Activated T-helper 1 cell treated with anti-CD3 and anti-CD28 coated beads, Interleukin-12 subunit alpha, Interleukin-12 subunit beta, Interleukin-2, Interleukin-4 antibody, amounts not matched to agents 30 ng/mL and 10 ng/mL and 1 ng/mL, durations not matched to agents 14 hours and 24 hours and 36 hours (primary cell): ENCODE measurements at regions of chr4 and their contacts with region 1.

Region 1: GRCh38 chr4:122151982-122152710 is at the start of gene BLTP1:
- DNase-seq: peak; percentile 89
- H3K4me3 Mint-ChIP-seq: peak within 1 kb of the TSS; percentile 97
- H3K27ac Mint-ChIP-seq: peak within 1 kb of the TSS; percentile 98
- H3K4me1 Mint-ChIP-seq: peaks cover 61% of the 10 kb centered on the region
- H3K27me3 Mint-ChIP-seq: no peaks in the 10 kb centered on the region
- total RNA-seq, gene BLTP1: 25.4 and 30.8 TPM in 2 replicates

Region 2: GRCh38 chr4:121800961-121801714 is 351.0 kb before region 1 on chr4 and contains the start of gene EXOSC9:
- intact Hi-C with region 1: loop called (anchors 2 kb)
- DNase-seq: peak; percentile 92
- H3K4me3 Mint-ChIP-seq: peak within 1 kb of the TSS; percentile 90
- H3K27ac Mint-ChIP-seq: peak within 1 kb of the TSS; percentile 97
- H3K4me1 Mint-ChIP-seq: peaks cover 51% of the 10 kb centered on the region
- H3K27me3 Mint-ChIP-seq: no peaks in the 10 kb centered on the region
- total RNA-seq, gene EXOSC9: 71.9 and 74.0 TPM in 2 replicates

Region 3: DNA sequence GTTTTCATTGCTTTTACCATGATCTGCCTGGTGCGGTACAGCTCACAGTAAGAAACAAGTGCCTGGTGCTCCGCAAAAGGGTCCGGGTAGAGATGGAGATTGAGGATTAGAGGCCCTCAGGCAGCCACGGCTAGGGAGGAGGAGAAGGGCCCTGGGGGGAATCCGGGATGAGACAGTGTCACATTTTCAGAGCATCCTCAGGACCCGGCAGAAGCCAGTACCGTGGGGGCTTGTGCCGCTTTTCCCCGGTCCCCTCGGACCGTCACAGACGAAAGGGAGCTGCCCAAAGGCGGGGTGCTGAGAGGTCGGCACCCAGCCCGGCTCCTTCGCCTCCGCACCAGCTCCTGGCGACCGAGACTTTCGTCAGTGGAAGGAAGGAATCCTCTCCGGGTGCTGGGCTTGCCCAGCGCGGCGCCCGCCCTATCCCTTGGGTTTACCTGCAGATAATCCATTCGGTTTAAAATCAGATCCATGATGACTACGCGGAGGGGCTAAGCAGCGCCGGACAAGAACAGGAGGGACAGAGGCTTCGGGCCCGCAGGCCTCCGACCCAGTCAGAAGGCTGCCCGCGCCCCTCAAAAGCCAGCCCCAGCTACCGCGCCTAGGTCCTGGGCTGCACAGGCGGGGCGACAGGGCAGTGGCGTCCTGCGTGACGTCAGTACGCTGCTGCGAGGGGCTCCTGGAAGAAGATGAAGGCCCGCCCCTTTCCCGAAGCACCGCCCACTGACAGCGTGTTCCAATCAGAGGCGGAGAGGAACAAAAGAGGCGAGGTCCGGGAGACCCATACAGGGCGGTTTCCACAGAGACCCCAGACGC is 282.1 kb before region 1 on chr4 and contains the start of gene BBS7:
- intact Hi-C with region 1: loop called (anchors 1 kb)
- DNase-seq: peak; percentile 94
- H3K4me3 Mint-ChIP-seq: peak within 1 kb of the TSS; percentile 99
- H3K27ac Mint-ChIP-seq: peak within 1 kb of the TSS; percentile 91
- H3K4me1 Mint-ChIP-seq: peaks cover 23% of the 10 kb centered on the region
- H3K27me3 Mint-ChIP-seq: peaks cover 22% of the 10 kb centered on the region
- total RNA-seq, gene BBS7: 16.9 and 20.2 TPM in 2 replicates

Region 4: DNA sequence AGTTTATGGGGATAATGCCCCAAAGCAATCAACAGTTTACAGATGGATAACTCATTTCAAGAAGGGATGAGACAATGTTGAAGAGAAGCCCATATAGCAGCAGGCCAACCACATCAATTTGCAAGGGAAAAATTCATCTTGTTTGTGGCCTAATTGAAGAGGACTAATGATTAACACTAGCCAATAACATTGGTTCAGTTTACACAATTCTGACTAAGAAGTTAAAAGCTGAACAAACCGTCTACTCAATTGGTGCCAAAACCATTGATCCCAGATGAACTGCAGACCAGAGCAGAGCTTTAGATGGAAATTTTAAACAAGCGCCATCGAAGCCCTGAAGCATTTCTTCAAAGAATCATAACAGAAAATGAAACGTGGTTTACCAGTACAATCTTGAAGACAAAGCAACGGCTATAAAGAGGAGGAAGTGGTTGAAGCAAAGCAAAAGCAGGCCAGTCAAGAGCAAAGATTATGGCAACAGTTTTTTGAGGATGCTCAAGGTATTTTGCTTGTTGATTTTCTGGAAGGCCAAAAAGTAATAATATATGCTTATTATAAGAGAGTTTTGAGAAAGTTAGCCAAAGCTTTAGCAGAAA is 20.5 kb before region 1 on chr4:
- intact Hi-C with region 1: loop called (anchors 2 kb)
- DNase-seq: peak; percentile 11
- H3K4me3 Mint-ChIP-seq: no peak overlapping the region
- H3K27ac Mint-ChIP-seq: peak overlapping the region; percentile 71
- H3K4me1 Mint-ChIP-seq: peaks cover 32% of the 10 kb centered on the region
- H3K27me3 Mint-ChIP-seq: no peaks in the 10 kb centered on the region

Region 5: DNA sequence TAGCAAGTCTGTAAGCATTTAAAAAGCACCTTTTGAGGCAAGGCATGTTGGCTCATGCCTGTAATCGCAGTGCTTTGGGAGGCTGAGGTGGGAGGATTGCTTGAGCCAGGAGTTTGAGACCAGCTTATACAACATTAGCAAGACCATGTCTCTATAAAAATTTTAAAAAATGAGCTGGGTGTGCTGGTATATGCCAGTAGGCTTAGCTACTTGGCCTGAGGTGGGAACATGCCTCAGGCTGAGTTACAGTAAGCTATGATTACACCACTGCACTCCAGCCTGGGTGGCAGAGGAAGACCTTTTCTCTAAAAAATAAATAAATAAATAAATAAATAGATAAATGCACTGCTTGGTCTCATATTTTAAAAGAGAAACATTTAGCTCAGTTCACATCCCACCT is 26.8 kb after region 1 on chr4:
- intact Hi-C with region 1: no loop called
- DNase-seq: no peak
- H3K4me3 Mint-ChIP-seq: no peak overlapping the region
- H3K27ac Mint-ChIP-seq: no peak overlapping the region
- H3K4me1 Mint-ChIP-seq: peaks cover 10% of the 10 kb centered on the region
- H3K27me3 Mint-ChIP-seq: no peaks in the 10 kb centered on the region

Region 6: GRCh38 chr4:122508083-122508482 is 355.9 kb after region 1 on chr4:
- intact Hi-C with region 1: loop called (anchors 2 kb)
- DNase-seq: no peak
- H3K4me3 Mint-ChIP-seq: peak overlapping the region; percentile 71
- H3K27ac Mint-ChIP-seq: peak overlapping the region; percentile 89
- H3K4me1 Mint-ChIP-seq: peaks cover 69% of the 10 kb centered on the region
- H3K27me3 Mint-ChIP-seq: no peaks in the 10 kb centered on the region

Region 7: GRCh38 chr4:122716825-122717448 is 564.8 kb after region 1 on chr4:
- intact Hi-C with region 1: loop called (anchors 10 kb)
- DNase-seq: peak; percentile 55
- H3K4me3 Mint-ChIP-seq: peak overlapping the region; percentile 25
- H3K27ac Mint-ChIP-seq: peak overlapping the region; percentile 81
- H3K4me1 Mint-ChIP-seq: peaks cover 46% of the 10 kb centered on the region
- H3K27me3 Mint-ChIP-seq: peaks cover 2% of the 10 kb centered on the region